Caco-2 (cell line): ENCODE measurements at regions of chr6 and their contacts with region 1.

Region 1: GRCh38 chr6:4936681-4937041 is 67.2 kb downstream of the RPP40 start:
- DNase-seq: peak in 1 of 2 experiments; percentile 39
- H3K4me3 ChIP-seq: no peak overlapping the region
- H3K4me3 Mint-ChIP-seq: no peak overlapping the region
- H3K27ac Mint-ChIP-seq: no peak overlapping the region
- H3K4me1 ChIP-seq: peaks cover 17% of the 10 kb centered on the region
- H3K4me1 Mint-ChIP-seq: peaks cover 9% of the 10 kb centered on the region
- H3K27me3 ChIP-seq: no peaks in the 10 kb centered on the region
- H3K27me3 Mint-ChIP-seq: no peaks in the 10 kb centered on the region
- CTCF ChIP-seq: peak; percentile 59 to 64

Region 2: DNA sequence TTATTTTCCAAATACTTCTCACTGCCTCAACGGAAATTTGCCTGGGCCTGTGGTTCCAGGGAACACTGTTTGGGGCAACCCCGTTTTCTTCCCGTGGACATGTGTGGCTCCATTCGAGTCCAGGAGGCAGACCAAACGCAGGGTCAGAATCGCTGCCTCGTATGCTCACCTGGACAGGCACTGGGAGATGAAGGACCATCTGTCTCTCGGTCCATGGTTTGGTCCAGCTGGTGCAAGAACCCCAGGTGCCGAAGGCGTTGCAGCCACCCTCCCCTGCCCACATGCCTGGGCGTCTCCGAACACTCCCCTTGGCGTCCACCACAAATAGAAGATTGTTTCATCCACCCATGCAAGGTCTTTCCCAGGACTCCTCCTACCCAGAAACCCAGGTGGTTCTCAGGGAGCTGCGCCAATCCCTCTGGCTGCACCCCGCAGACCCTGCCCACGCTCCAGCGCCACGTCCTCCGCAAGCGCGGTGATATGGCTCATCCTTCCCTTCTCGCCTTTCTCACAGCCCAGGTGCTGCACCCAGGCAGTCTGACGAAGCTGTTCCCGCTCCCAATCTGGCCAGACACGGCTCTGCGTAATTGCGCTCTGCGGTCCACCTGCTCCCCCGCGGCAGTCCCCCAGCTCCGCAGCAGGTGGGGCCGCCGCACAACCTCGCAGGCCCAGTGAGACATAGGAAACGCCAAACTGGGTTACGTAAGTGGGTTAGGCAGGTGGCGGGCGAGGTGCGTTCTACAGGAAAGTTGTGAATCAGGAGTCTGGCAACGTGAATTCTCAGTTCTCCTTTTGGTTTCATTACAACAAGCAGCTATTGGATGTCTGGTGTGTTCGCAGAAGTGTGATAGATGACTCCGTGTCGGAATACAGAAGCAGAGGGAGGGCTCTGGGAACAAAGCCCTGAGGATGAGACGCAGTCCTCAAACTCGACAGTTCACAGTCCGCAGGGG is 655.0 kb before region 1 on chr6:
- CTCF ChIA-PET with region 1: no interaction called
- POLR2A ChIA-PET with region 1: no interaction called
- intact Hi-C with region 1: loop called (anchors 5 kb)
- DNase-seq: peak; percentile 61 to 66
- H3K4me3 ChIP-seq: peak overlapping the region; percentile 10
- H3K4me3 Mint-ChIP-seq: peak overlapping the region; percentile 67
- H3K27ac Mint-ChIP-seq: no peak overlapping the region
- H3K4me1 ChIP-seq: no peaks in the 10 kb centered on the region
- H3K4me1 Mint-ChIP-seq: no peaks in the 10 kb centered on the region
- H3K27me3 ChIP-seq: peaks cover 3% of the 10 kb centered on the region
- H3K27me3 Mint-ChIP-seq: peaks cover 14% of the 10 kb centered on the region
- CTCF ChIP-seq: peak; percentile 47 to 76

Region 3: GRCh38 chr6:4714961-4715501 is 221.6 kb before region 1 on chr6:
- CTCF ChIA-PET with region 1: no interaction called
- POLR2A ChIA-PET with region 1: no interaction called
- intact Hi-C with region 1: no loop called
- DNase-seq: no peak
- H3K4me3 ChIP-seq: no peak overlapping the region
- H3K4me3 Mint-ChIP-seq: no peak overlapping the region
- H3K27ac Mint-ChIP-seq: no peak overlapping the region
- H3K4me1 ChIP-seq: no peaks in the 10 kb centered on the region
- H3K4me1 Mint-ChIP-seq: no peaks in the 10 kb centered on the region
- H3K27me3 ChIP-seq: no peaks in the 10 kb centered on the region
- H3K27me3 Mint-ChIP-seq: no peaks in the 10 kb centered on the region
- CTCF ChIP-seq: no peak

Region 4: DNA sequence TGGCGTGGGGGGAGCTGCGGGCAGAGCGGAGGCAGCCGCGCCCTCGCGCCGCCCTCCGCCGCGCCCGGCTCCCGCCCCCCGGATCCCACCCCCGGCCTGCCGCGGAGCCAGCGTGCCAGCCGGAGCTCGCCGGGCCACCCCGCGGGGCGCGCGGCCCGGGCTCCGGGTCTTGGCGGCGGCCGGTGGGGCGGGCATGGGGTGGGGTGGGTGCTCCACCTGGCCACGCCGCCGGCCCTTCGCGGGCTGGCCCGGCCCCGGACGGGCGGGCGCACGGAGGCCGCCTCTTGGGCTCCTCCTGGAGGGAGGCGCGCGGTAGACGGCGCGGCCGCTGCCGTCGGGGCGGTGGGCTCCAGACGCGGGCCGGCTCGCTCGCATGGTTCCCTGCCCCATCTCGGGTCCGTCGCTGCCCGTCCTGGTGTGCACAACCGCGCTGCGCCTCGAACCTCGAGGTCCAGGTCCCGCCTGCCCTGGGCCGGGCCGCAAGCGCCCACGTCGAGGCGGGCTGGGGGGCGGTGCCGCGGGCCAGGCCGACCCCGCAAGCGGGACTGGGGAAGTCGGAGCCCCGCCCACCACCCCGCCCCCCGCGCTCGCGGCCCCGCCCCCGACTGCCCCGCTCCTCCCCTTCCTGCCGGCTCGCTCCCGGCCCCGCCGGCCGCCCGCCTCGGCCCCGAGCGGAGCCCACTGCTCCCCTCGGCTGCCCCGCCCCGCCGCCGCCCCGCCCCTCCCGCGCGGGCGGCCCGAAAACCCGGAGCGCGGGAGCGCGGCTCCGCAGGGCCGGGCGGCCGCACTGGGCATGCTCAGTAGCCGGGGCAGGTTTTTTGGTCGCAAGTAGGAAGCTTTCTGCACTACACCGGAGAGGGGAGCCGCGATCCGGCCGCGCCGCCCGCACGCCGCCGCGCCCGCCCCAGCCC is 160.8 kb before region 1 on chr6 and contains the start of gene CDYL:
- CTCF ChIA-PET with region 1: no interaction called
- POLR2A ChIA-PET with region 1: interaction called, 4 read pairs
- intact Hi-C with region 1: loop called (anchors 10 kb)
- DNase-seq: peak; percentile 85 to 93
- H3K4me3 ChIP-seq: peak within 1 kb of the TSS; percentile 76
- H3K4me3 Mint-ChIP-seq: peak within 1 kb of the TSS; percentile 93
- H3K27ac Mint-ChIP-seq: peak within 1 kb of the TSS; percentile 89
- H3K4me1 ChIP-seq: no peaks in the 10 kb centered on the region
- H3K4me1 Mint-ChIP-seq: peaks cover 8% of the 10 kb centered on the region
- H3K27me3 ChIP-seq: no peaks in the 10 kb centered on the region
- H3K27me3 Mint-ChIP-seq: no peaks in the 10 kb centered on the region
- CTCF ChIP-seq: peak in 1 of 2 experiments; percentile 16
- total RNA-seq, gene CDYL: 41.6 and 51.2 TPM in 2 replicates

Region 5: DNA sequence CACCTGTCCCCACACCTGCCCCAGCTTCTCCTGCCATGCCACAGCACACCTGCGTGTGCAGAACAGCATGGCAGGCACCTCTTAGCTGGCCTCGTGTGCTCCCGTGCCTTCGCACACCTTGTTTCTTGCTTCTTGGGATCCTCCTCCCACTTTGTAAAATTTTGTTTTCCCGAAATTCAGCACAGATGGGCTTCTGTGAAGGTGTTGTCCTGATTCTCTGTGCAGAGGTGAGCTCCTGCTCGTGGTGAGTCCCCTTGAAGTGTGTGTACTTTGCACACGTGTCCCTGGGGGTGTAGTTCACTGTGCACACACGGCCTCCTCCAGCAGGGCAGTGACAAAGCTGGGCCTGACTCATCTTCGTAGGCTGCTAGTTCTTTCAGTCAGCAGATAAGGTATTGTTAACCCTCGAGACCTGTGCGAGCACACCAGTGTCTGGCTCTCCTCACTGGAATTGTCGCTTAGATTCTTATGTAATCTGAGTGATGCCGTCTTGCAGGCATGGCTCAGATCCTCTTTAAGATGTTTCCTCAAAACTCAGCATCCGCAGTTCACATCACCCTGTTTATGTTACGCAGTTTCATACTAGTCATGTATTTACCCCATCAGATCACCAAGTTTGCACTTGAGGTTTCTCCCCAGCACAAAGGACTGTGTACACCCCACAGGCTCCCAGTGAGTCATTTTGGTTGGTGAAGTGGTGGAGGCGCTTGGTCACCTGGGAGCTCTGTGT is 82.7 kb before region 1 on chr6:
- CTCF ChIA-PET with region 1: no interaction called
- POLR2A ChIA-PET with region 1: no interaction called
- intact Hi-C with region 1: loop called (anchors 5 kb)
- DNase-seq: peak; percentile 39 to 69
- H3K4me3 ChIP-seq: peak overlapping the region; percentile 7; the same call in 1 of the 2 replicates
- H3K4me3 Mint-ChIP-seq: peak overlapping the region; percentile 55
- H3K27ac Mint-ChIP-seq: peak overlapping the region; percentile 56
- H3K4me1 ChIP-seq: peaks cover 21% of the 10 kb centered on the region
- H3K4me1 Mint-ChIP-seq: peaks cover 27% of the 10 kb centered on the region
- H3K27me3 ChIP-seq: no peaks in the 10 kb centered on the region
- H3K27me3 Mint-ChIP-seq: no peaks in the 10 kb centered on the region
- CTCF ChIP-seq: no peak